Activated T-helper 2 cell treated with anti-CD3 and anti-CD28 coated beads, Interferon-gamma antibody, Interleukin-2, Interleukin-4, amounts not matched to agents 10 μg/mL and 5 μg/mL and 100 μg/mL, durations not matched to agents 14 hours and 24 hours and 36 hours (primary cell): ENCODE measurements at regions of chr6 and their contacts with region 1.

Region 1: DNA sequence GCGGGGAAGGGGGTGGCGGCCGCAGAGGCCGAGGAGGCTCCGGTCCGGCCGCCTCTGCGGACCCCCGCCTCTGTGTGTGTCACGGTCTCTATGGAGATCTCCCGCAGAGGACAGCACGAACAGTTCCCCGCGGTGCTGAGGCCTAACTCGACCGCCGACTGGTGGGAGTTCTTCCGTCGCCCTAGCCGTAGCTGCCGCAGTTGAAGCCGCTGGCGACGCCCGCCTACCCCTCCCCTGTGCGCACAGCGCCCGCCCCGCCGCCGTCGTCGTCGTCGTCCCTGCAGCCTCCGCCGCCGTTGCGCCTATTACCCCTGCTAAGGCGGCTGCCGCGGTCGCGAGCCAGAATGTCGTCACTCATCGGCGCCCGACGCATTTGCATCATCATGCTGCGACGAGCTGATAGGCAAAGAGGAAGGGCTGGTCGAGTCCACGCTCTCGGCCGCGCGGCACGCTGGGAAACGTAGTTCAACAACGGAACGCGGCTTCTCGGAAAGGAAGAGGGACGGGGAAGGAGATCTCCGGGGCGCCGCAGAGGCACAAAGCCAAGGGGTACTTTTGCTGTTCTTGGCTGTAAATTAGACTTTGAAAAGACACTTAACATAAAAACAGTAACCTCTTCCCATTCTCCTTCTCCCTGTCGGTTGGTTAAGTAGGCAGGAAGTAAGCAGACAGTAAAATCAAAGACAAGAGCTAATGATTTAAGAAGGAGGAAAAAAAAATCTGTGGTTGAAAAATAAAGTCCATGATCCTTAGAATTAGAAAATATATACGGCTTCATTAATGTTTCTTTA is at the start of gene NUP153:
- DNase-seq: peak; percentile 100
- H3K4me3 Mint-ChIP-seq: peak within 1 kb of the TSS; percentile 94
- H3K27ac Mint-ChIP-seq: peak within 1 kb of the TSS; percentile 98
- H3K4me1 Mint-ChIP-seq: peaks cover 27% of the 10 kb centered on the region
- H3K27me3 Mint-ChIP-seq: no peaks in the 10 kb centered on the region
- total RNA-seq, gene NUP153: 90.2 and 93.5 TPM in 2 replicates

Region 2: DNA sequence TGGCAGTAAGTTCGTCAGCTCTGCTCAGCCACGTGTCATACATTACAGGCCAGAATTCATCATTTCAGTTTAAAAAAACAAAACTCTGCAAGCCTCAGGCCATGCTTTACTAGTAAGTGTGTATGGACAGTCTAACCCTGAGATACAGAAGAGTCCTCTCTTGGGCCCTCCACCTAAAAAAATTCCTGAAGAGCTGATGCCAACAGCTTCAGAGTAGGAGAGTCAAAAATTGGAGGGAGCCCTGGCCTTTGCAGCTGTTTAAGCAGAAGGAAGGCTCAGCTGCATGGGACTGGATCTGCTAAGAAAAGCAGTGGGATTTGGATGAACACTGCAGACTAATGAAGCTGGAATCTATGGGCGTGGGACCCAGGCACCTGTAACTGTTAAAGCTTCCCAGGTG is 153.9 kb before region 1 on chr6:
- intact Hi-C with region 1: no loop called
- DNase-seq: no peak
- H3K4me3 Mint-ChIP-seq: no peak overlapping the region
- H3K27ac Mint-ChIP-seq: no peak overlapping the region
- H3K4me1 Mint-ChIP-seq: no peaks in the 10 kb centered on the region
- H3K27me3 Mint-ChIP-seq: no peaks in the 10 kb centered on the region

Region 3: DNA sequence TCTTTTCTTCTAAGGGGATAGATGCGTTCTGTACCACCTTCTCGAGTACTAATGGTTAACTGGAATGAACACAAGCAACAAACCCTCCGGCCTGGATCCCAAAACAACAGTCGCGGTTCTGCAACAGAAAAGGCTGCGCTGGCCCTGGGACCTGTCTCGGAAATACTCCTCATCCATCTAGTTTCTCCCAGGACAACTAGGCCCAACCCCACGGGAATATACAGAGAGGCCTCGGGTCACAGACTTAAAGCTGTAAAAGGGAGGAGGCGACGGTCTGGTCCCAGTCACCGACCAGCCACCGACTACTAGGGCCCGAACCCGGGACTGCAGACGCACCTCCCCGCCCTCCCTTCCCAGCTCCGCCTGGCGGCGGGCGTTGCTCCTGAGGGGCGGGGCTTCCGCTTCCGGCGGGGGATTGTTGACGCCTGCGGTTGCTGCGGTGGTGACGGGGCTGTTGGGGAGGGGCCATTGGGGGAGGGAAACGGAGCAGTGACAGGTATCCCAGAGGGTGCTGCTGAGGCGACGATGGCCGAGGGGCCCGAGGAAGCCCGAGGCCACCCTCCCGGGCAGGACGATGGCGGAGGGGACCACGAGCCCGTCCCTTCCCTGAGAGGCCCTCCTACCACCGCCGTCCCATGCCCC is 106.8 kb before region 1 on chr6 and contains the start of gene FAM8A1:
- intact Hi-C with region 1: loop called (anchors 1 kb)
- DNase-seq: peak; percentile 92
- H3K4me3 Mint-ChIP-seq: peak within 1 kb of the TSS; percentile 89
- H3K27ac Mint-ChIP-seq: peak within 1 kb of the TSS; percentile 86
- H3K4me1 Mint-ChIP-seq: peaks cover 24% of the 10 kb centered on the region
- H3K27me3 Mint-ChIP-seq: no peaks in the 10 kb centered on the region
- total RNA-seq, gene FAM8A1: 4.8 and 4.9 TPM in 2 replicates

Region 4: GRCh38 chr6:17653198-17653882 is 53.4 kb before region 1 on chr6:
- intact Hi-C with region 1: loop called (anchors 1 kb)
- DNase-seq: no peak
- H3K4me3 Mint-ChIP-seq: no peak overlapping the region
- H3K27ac Mint-ChIP-seq: peak overlapping the region; percentile 77
- H3K4me1 Mint-ChIP-seq: peaks cover 30% of the 10 kb centered on the region
- H3K27me3 Mint-ChIP-seq: no peaks in the 10 kb centered on the region

Region 5: GRCh38 chr6:17673543-17674254 is 33.1 kb before region 1 on chr6:
- intact Hi-C with region 1: loop called (anchors 1 kb)
- DNase-seq: no peak
- H3K4me3 Mint-ChIP-seq: no peak overlapping the region
- H3K27ac Mint-ChIP-seq: peak overlapping the region; percentile 74
- H3K4me1 Mint-ChIP-seq: peaks cover 35% of the 10 kb centered on the region
- H3K27me3 Mint-ChIP-seq: no peaks in the 10 kb centered on the region

Region 6: GRCh38 chr6:18264219-18264922 is 557.6 kb after region 1 on chr6 and contains the start of gene DEK:
- intact Hi-C with region 1: loop called (anchors 2 kb)
- DNase-seq: peak; percentile 82
- H3K4me3 Mint-ChIP-seq: peak within 1 kb of the TSS; percentile 98
- H3K27ac Mint-ChIP-seq: peak within 1 kb of the TSS; percentile 97
- H3K4me1 Mint-ChIP-seq: peaks cover 40% of the 10 kb centered on the region
- H3K27me3 Mint-ChIP-seq: no peaks in the 10 kb centered on the region
- total RNA-seq, gene DEK: 182 and 198 TPM in 2 replicates